B cell (primary cell): ENCODE measurements at regions of chr4 and their contacts with region 1.

Region 1: GRCh38 chr4:1579901-1580691 is 104.0 kb downstream of the FAM53A start:
- DNase-seq: peak; percentile 95
- ATAC-seq: peak; percentile 79
- H3K4me3 ChIP-seq: peak overlapping the region; percentile 72 to 84 (median 76)
- H3K4me3 Mint-ChIP-seq: peak overlapping the region; percentile 85
- H3K27ac ChIP-seq: peak overlapping the region; percentile 46 to 71
- H3K27ac Mint-ChIP-seq: peak overlapping the region; percentile 83
- H3K4me1 ChIP-seq: peaks cover 0 to 4% of the 10 kb centered on the region in 2 donors
- H3K4me1 Mint-ChIP-seq: peaks cover 4% of the 10 kb centered on the region
- H3K27me3 ChIP-seq: no peaks in the 10 kb centered on the region
- H3K27me3 Mint-ChIP-seq: no peaks in the 10 kb centered on the region
- CTCF ChIP-seq: no peak

Region 2: GRCh38 chr4:1309261-1310010 is 270.7 kb before region 1 on chr4:
- CTCF ChIA-PET with region 1: no interaction called
- POLR2A ChIA-PET with region 1: no interaction called
- intact Hi-C with region 1: no loop called
- DNase-seq: peak; percentile 61
- ATAC-seq: peak; percentile 89
- H3K4me3 ChIP-seq: peak overlapping the region; percentile 17 to 35 (median 34)
- H3K4me3 Mint-ChIP-seq: peak overlapping the region; percentile 81
- H3K27ac ChIP-seq: peak overlapping the region in 1 of 2 donors; percentile 51
- H3K27ac Mint-ChIP-seq: peak overlapping the region; percentile 50
- H3K4me1 ChIP-seq: peaks cover 18 to 38% of the 10 kb centered on the region in 2 donors
- H3K4me1 Mint-ChIP-seq: peaks cover 53% of the 10 kb centered on the region
- H3K27me3 ChIP-seq: no peaks in the 10 kb centered on the region
- H3K27me3 Mint-ChIP-seq: no peaks in the 10 kb centered on the region
- CTCF ChIP-seq: no peak

Region 3: DNA sequence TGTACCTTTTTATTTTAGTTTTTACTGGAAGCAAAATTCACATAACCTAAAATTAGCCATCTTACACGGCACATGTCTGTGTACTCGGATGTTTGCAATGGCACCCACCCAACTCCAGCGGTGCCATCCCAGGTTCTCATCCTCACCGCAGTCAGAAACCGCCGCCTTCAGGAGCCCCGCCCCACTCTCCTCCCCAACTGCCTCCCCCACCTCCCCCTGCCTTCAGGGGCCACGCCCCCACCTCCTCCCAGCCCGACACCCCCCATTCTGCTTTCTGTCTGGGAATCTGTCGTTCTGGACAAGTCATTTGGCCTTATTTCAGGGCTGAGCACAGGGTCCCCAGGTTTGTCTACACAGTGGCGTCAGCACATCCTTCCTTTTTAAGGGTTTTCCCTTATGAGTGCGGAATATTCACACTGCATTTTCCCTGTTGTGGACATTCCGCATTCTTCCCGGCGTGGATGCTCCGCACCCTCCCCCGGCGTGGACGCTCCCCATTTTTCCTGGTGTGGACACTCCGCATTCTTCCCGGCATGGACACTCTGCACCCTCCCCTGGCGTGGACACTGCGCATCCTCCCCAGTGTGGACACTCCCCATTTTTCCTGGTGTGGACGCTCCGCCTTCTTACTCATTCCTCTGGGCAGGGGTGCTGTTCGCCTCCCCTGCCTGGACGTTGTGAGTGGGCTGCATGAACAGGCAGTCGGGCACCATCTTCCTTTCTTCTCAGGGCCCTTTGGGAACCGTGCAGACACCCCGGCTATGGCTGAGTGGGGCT is 38.5 kb before region 1 on chr4:
- CTCF ChIA-PET with region 1: no interaction called
- POLR2A ChIA-PET with region 1: no interaction called
- intact Hi-C with region 1: no loop called
- DNase-seq: no peak
- ATAC-seq: no peak
- H3K4me3 ChIP-seq: no peak overlapping the region
- H3K4me3 Mint-ChIP-seq: no peak overlapping the region
- H3K27ac ChIP-seq: no peak overlapping the region
- H3K27ac Mint-ChIP-seq: no peak overlapping the region
- H3K4me1 ChIP-seq: no peaks in the 10 kb centered on the region
- H3K4me1 Mint-ChIP-seq: no peaks in the 10 kb centered on the region
- H3K27me3 ChIP-seq: no peaks in the 10 kb centered on the region
- H3K27me3 Mint-ChIP-seq: no peaks in the 10 kb centered on the region
- CTCF ChIP-seq: no peak

Region 4: GRCh38 chr4:3292571-3293400 is 1712.7 kb after region 1 on chr4 and contains the start of gene RGS12:
- CTCF ChIA-PET with region 1: no interaction called
- POLR2A ChIA-PET with region 1: no interaction called
- intact Hi-C with region 1: loop called (anchors 5 kb)
- DNase-seq: peak; percentile 82
- ATAC-seq: peak; percentile 82
- H3K4me3 ChIP-seq: peak within 1 kb of the TSS; percentile 8 to 80 (median 72)
- H3K4me3 Mint-ChIP-seq: peak within 1 kb of the TSS; percentile 89
- H3K27ac ChIP-seq: peak within 1 kb of the TSS in 1 of 2 donors; percentile 48
- H3K27ac Mint-ChIP-seq: peak within 1 kb of the TSS; percentile 81
- H3K4me1 ChIP-seq: peaks cover 7 to 17% of the 10 kb centered on the region in 2 donors
- H3K4me1 Mint-ChIP-seq: peaks cover 13% of the 10 kb centered on the region
- H3K27me3 ChIP-seq: peaks cover 0 to 20% (median 3%) of the 10 kb centered on the region in 4 experiments
- H3K27me3 Mint-ChIP-seq: peaks cover 14% of the 10 kb centered on the region
- CTCF ChIP-seq: no peak
- total RNA-seq, gene RGS12: 13.1 and 13.9 TPM in 2 replicates